Activated CD8-positive, alpha-beta memory T cell treated with anti-CD3 and anti-CD28 coated beads, Interleukin-2, amount 10 ng/mL, durations not matched to agents 7 days and 5 days (primary cell): ENCODE measurements at regions of chr13 and their contacts with region 1.

Region 1: GRCh38 chr13:99269627-99270241 is 11.6 kb upstream of the GPR18 start:
- DNase-seq: no peak
- ATAC-seq: peak; percentile 70
- H3K4me3 Mint-ChIP-seq: no peak overlapping the region
- H3K27ac Mint-ChIP-seq: no peak overlapping the region
- H3K4me1 Mint-ChIP-seq: peaks cover 62% of the 10 kb centered on the region
- H3K27me3 Mint-ChIP-seq: no peaks in the 10 kb centered on the region

Region 2: DNA sequence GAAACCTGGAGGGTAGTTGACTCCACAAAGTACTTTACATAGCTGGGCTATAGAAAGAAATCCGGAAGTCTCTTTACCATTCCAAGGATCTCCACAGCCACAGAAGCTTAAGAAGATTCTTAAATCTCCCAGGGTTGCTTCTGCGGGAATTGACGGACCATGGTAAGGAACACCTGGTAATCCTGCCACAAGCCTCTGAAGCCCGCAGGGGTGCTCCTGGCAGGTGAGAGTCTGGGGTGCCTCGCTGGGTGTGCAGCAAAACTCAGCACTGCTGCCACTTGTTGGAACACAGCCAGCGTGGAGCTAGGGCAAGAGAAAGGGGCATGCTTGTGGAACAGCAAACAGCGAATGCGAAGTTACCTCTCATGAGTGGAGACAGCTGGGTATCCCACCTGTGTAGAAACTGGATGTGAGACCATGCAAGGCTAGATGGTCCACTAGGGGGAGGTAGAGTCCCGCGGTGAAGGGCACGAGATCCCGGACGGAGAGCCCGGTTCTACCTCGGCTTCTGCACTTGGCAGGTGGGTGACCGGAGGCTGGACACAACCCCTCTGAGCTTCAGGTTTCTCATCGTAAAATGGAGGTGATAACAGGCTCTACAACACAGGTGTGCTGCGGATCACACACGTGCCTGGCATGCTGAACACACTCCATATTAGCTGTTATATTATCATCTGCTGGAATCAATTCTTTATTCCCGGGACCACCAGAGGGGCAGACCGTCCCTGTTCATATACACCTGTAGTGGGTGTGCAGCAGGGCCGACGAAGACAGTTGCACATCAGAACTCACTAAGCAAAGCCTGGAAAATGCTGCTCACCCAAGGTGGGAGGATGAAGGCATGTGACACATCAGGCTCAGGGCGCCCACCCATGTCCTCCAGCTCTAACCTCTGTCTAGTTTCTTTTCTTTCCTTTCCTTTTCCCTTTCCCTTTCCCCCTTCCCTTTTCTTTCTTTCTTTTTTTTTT is 93.1 kb before region 1 on chr13:
- CTCF ChIA-PET with region 1: interaction called, 308 read pairs
- DNase-seq: peak; percentile 84
- ATAC-seq: peak; percentile 88
- H3K4me3 Mint-ChIP-seq: no peak overlapping the region
- H3K27ac Mint-ChIP-seq: peak overlapping the region; percentile 53
- H3K4me1 Mint-ChIP-seq: peaks cover 31% of the 10 kb centered on the region
- H3K27me3 Mint-ChIP-seq: peaks cover 2% of the 10 kb centered on the region

Region 3: GRCh38 chr13:99208845-99209527 is 60.7 kb before region 1 on chr13:
- CTCF ChIA-PET with region 1: interaction called, 151 read pairs
- DNase-seq: no peak
- ATAC-seq: no peak
- H3K4me3 Mint-ChIP-seq: no peak overlapping the region
- H3K27ac Mint-ChIP-seq: no peak overlapping the region
- H3K4me1 Mint-ChIP-seq: peaks cover 64% of the 10 kb centered on the region
- H3K27me3 Mint-ChIP-seq: no peaks in the 10 kb centered on the region

Region 4: DNA sequence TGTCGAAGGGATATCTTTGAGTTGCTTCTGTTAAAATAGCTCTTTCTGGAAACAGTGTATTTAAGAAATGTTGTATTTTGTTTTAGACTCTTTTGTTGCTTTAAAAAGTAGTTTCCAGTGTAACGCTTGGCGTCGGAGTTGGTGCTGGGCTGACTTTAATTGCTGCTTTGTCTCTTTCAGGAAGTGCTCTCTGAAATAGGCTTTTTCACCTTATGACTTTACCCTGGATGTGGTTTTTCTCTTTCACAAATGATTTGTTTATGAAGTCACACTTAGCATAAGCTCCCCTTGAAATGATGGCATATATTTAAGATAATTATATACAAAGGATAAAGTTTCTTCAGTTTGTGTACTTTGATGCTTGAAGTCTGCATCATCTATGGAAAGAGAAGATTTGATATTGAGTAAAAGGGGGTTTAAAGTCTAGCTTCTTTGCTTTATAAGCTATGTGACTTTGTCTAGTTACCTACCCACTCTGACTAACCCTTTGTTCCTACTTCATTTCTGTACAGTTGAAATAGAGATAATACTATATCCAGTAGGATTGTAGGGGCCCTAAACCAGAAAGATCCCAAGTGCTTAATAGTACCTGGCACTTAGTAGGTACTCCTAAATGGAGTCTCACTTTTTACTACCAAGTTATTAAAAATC is 11.4 kb before region 1 on chr13 and contains the start of gene GPR18:
- CTCF ChIA-PET with region 1: interaction called, 12 read pairs
- DNase-seq: peak; percentile 61
- ATAC-seq: peak; percentile 83
- H3K4me3 Mint-ChIP-seq: peak within 1 kb of the TSS; percentile 86
- H3K27ac Mint-ChIP-seq: peak within 1 kb of the TSS; percentile 94
- H3K4me1 Mint-ChIP-seq: peaks cover 57% of the 10 kb centered on the region
- H3K27me3 Mint-ChIP-seq: no peaks in the 10 kb centered on the region
- total RNA-seq, gene GPR18: 11.1 to 13.1 TPM

Region 5: DNA sequence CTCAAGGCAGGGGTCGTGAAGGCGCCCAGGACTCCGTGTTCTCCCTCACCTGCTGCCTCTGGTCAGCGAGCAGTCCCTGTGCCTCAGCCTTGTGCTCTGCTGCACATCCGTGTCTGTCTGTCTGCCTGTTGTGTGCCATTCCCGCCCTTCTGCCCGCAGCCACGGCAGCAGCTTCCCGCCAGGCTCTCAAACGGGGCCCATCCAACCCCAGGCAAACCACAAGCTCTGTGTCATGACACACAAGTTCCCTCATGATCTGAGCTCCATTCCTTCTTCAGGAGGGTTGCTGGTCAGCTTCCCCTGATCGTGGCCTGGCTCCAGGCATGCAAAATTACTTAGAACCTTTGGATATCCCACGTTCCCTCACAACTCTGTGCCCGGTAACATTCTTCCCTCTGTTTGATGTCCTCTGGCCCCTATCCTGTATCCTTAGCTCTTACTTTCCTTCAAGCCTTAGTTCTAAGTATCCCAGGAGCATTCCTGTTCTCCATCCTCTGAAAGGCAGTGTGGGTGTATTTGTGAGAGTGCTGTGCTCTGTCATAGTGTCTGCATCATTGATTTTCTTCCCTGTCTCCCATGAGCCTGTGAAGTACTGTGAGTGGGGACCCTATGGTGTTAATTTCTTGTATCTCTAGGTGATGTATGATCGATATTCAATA is 34.3 kb after region 1 on chr13:
- CTCF ChIA-PET with region 1: interaction called, 10 read pairs
- DNase-seq: peak; percentile 68
- ATAC-seq: peak; percentile 8
- H3K4me3 Mint-ChIP-seq: peak overlapping the region; percentile 78
- H3K27ac Mint-ChIP-seq: peak overlapping the region; percentile 84
- H3K4me1 Mint-ChIP-seq: peaks cover 81% of the 10 kb centered on the region
- H3K27me3 Mint-ChIP-seq: no peaks in the 10 kb centered on the region

Region 6: DNA sequence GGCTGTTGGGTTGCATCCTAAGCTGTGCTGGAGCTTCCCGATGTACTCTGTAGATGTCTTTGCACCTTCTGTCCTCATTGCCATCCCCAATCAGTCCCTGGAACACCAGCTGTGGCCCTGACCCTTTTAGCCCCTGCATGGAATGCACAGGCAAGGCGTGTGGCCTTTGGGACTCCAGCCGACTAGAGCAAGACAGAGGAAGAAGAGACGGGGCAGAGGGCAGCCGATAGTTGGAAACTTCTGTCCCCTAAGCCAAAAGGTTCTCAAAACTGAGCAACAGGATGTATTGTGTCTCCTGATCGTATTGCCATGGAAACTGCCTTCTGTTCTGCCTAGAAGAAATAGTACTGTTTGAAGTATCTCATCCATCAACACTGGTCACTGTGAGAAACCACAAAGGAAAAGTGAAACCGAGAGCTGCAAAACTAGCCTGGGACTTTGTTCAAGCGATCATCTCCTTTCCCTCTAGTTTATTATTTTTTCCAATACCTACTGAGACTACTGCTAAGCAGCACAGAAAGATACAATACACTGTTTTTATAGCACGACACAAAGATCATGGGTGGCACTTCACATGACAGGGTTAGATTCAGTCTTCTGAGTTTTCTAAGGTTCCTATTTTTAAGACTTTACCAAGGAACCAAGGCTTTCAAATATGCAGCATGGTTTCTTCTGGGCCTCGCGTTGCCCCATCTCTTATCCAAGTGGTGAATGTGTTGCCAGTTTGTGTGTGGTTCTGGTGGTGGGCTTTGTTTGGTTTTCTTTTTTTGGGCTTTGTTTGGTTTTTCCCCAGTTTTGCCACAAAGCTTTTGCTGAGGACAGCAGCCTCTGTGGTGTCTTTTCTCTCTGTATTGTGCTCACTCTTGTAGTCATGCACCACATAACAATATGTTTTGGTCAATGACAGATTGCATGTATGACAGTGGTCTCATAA is 86.7 kb after region 1 on chr13:
- CTCF ChIA-PET with region 1: interaction called, 23 read pairs
- DNase-seq: peak; percentile 83
- ATAC-seq: peak; percentile 67
- H3K4me3 Mint-ChIP-seq: peak overlapping the region; percentile 48
- H3K27ac Mint-ChIP-seq: peak overlapping the region; percentile 95
- H3K4me1 Mint-ChIP-seq: peaks cover 91% of the 10 kb centered on the region
- H3K27me3 Mint-ChIP-seq: no peaks in the 10 kb centered on the region

Region 7: DNA sequence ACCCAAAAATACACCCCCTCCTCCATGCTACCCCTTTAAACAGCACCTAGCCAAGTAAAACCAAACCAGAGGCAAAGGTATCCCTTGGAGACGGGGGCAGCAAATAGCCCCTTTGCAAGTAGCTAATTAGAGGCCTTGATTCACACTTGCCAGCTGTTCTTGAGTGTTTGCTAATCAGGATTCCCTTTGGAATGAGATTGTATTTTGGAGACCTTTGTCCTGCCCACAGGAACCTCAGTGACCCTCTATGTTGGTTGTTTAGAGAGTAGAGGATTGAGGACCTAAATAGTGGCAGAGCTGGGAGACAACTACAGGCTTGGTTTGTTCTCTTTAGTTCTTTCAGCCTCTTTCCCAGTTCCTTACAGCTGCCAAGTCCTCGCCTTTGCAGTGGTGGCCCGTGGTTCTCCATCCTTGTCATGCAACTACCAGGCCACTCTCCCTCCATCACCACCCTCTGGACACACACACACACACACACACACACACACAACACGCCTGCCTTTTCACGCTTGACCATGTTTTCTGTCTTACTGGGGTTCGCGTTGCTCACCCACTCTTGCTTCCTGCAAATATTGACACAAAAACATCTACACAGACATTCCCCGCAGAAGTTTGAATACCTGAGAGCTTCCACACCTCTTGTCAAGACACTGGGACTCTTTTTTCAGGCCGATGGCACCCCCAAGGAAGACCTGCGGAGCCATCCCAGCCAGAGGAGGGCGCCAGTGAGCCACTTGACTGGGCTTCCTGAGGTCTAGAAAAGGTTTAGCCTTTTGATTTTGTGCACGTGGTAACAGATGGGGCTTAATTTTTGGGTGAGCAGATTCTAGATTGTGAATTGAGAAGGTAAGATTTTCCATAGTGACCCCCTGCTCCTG is 117.4 kb after region 1 on chr13:
- CTCF ChIA-PET with region 1: interaction called, 178 read pairs
- DNase-seq: peak; percentile 87
- ATAC-seq: peak; percentile 65
- H3K4me3 Mint-ChIP-seq: no peak overlapping the region
- H3K27ac Mint-ChIP-seq: peak overlapping the region; percentile 25
- H3K4me1 Mint-ChIP-seq: peaks cover 37% of the 10 kb centered on the region
- H3K27me3 Mint-ChIP-seq: no peaks in the 10 kb centered on the region

Region 8: GRCh38 chr13:99471221-99472121 is 201.7 kb after region 1 on chr13:
- CTCF ChIA-PET with region 1: no interaction called
- DNase-seq: no peak
- ATAC-seq: no peak
- H3K4me3 Mint-ChIP-seq: no peak overlapping the region
- H3K27ac Mint-ChIP-seq: no peak overlapping the region
- H3K4me1 Mint-ChIP-seq: peaks cover 18% of the 10 kb centered on the region
- H3K27me3 Mint-ChIP-seq: no peaks in the 10 kb centered on the region